HepG2 (cell line): ENCODE measurements at regions of chr11 and their contacts with region 1.

Region 1: GRCh38 chr11:105000797-105001196 is 22.2 kb downstream of the CASP5 start:
- DNase-seq: no peak
- ATAC-seq: no peak; the same call in 2 of the 3 replicates
- H3K4me3 ChIP-seq: no peak overlapping the region
- H3K27ac ChIP-seq: no peak overlapping the region
- H3K4me1 ChIP-seq: peaks cover 39% of the 10 kb centered on the region
- H3K27me3 ChIP-seq: no peaks in the 10 kb centered on the region
- CTCF ChIP-seq: peak; percentile 65
- EP300 ChIP-seq: no peak
- POLR2A ChIP-seq: no peak
- RAD21 ChIP-seq: no peak

Region 2: DNA sequence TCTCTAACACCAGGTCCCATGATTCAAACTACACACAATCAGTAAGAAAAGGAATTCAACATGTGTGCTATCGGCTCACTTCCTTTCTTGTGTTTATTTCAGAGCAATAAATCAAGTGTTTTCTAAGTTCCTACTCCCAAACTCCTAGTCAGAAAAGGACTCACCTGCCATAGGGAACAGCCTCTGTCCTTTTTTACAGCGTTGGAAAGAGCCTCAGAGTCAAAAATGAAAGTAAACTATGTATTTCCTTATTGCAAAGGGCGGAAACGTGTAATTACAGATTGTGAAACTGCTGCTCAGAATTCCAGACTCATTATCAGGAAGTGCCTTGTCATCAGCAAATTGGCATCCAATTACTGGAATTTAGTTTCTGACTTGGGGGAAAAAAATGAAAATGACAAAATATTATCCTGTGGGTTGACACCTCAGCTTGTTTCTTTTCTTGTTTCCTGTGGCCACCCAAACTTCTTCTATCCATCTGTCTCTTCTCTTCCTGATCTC is 32.4 kb before region 1 on chr11 and contains the start of gene CASP4:
- CTCF ChIA-PET with region 1: no interaction called
- POLR2A ChIA-PET with region 1: no interaction called
- in situ Hi-C with region 1: no loop called
- intact Hi-C with region 1: loop called (anchors 2 kb)
- DNase-seq: peak; percentile 56
- ATAC-seq: peak; percentile 52
- H3K4me3 ChIP-seq: peak within 1 kb of the TSS; percentile 67 to 84 (median 78)
- H3K27ac ChIP-seq: peak within 1 kb of the TSS; percentile 72
- H3K4me1 ChIP-seq: peaks cover 33% of the 10 kb centered on the region
- H3K27me3 ChIP-seq: no peaks in the 10 kb centered on the region; a peak in 1 of 5 replicates
- CTCF ChIP-seq: no peak
- EP300 ChIP-seq: peak in 1 of 2 experiments; percentile 23; a peak in 1 of 4 replicates
- POLR2A ChIP-seq: peak in 1 of 2 experiments; percentile 52; a peak in 2 of 4 replicates
- RAD21 ChIP-seq: no peak
- total RNA-seq, gene CASP4: 69.8 and 98.1 TPM in 2 replicates

Region 3: DNA sequence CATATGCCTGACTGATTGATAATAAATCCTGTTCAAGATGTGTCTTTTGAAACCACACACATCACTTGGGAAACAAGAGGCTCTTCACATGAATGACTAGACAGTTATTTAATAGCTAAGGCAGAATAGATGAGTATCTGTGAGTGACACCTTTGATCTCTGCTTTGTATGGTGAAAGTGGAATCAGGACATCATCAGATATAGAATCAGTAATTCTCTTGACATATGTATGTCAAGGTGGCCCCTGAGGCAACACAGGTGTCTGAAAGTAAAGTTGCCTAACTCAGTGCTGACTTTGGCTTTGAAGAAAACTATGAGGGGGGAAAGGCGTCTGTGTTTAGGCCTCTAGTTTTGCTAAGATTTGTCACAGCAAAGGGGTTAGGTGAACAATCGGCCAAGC is 20.9 kb before region 1 on chr11:
- CTCF ChIA-PET with region 1: no interaction called
- POLR2A ChIA-PET with region 1: no interaction called
- in situ Hi-C with region 1: no loop called
- intact Hi-C with region 1: no loop called
- DNase-seq: no peak
- ATAC-seq: no peak
- H3K4me3 ChIP-seq: no peak overlapping the region
- H3K27ac ChIP-seq: no peak overlapping the region
- H3K4me1 ChIP-seq: no peaks in the 10 kb centered on the region
- H3K27me3 ChIP-seq: no peaks in the 10 kb centered on the region
- CTCF ChIP-seq: no peak
- EP300 ChIP-seq: no peak
- POLR2A ChIP-seq: no peak
- RAD21 ChIP-seq: no peak

Region 4: GRCh38 chr11:105044921-105045524 is 44.2 kb after region 1 on chr11 and contains the start of gene CARD16:
- CTCF ChIA-PET with region 1: no interaction called
- POLR2A ChIA-PET with region 1: no interaction called
- in situ Hi-C with region 1: no loop called
- intact Hi-C with region 1: loop called (anchors 2 kb)
- DNase-seq: no peak
- ATAC-seq: no peak
- H3K4me3 ChIP-seq: no peak within 1 kb of the TSS
- H3K27ac ChIP-seq: no peak within 1 kb of the TSS
- H3K4me1 ChIP-seq: peaks cover 62% of the 10 kb centered on the region
- H3K27me3 ChIP-seq: no peaks in the 10 kb centered on the region
- CTCF ChIP-seq: no peak
- EP300 ChIP-seq: no peak
- POLR2A ChIP-seq: no peak
- RAD21 ChIP-seq: no peak
- total RNA-seq, gene CARD16: 0.53 TPM in 1 of 2 replicates, not detected in the other

Region 5: DNA sequence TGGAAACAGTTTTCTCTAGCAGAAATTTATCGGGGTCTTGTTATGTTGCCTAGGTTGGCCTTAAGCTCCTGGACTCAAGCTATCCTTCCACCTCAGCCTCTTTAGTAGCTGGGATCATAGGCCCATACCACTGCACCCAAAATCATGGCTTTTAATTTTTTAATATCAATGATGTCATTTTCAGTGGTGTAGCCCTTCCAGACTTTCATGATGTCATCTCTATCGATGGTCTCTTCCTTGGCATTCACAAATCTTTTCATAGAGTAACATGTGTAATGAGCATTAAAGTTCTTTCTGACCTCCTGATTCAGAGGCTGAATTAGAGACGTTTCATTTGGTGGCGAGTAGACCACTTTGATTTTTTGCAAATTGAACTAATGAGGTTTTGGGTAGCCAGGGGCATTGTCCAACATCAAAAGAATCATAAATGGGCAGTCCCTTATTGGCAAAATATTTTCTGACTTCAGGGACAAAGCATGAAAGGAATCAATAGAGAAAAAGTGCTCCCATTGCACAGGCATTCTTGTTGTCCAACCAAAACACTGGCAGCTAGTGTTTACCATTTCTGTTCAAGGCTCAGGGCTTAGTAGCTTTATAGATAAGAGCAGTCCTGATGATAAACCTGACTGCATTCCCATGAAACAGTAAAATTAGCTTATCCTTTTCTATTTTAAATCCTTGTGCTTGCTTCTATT is 50.6 kb after region 1 on chr11:
- CTCF ChIA-PET with region 1: no interaction called
- POLR2A ChIA-PET with region 1: no interaction called
- in situ Hi-C with region 1: no loop called
- intact Hi-C with region 1: loop called (anchors 2 kb)
- DNase-seq: peak; percentile 84
- ATAC-seq: peak; percentile 95
- H3K4me3 ChIP-seq: no peak overlapping the region; a peak in 1 of 6 replicates
- H3K27ac ChIP-seq: peak overlapping the region; percentile 62
- H3K4me1 ChIP-seq: peaks cover 68% of the 10 kb centered on the region
- H3K27me3 ChIP-seq: no peaks in the 10 kb centered on the region
- CTCF ChIP-seq: no peak
- EP300 ChIP-seq: peak in 1 of 2 experiments; percentile 86; a peak in 2 of 4 replicates
- POLR2A ChIP-seq: no peak
- RAD21 ChIP-seq: no peak

Region 6: GRCh38 chr11:105132716-105133511 is 132.1 kb after region 1 on chr11:
- CTCF ChIA-PET with region 1: no interaction called
- POLR2A ChIA-PET with region 1: no interaction called
- in situ Hi-C with region 1: no loop called
- intact Hi-C with region 1: loop called (anchors 5 kb)
- DNase-seq: peak; percentile 6
- ATAC-seq: no peak
- H3K4me3 ChIP-seq: no peak overlapping the region
- H3K27ac ChIP-seq: no peak overlapping the region
- H3K4me1 ChIP-seq: no peaks in the 10 kb centered on the region
- H3K27me3 ChIP-seq: no peaks in the 10 kb centered on the region
- CTCF ChIP-seq: no peak
- EP300 ChIP-seq: no peak
- POLR2A ChIP-seq: no peak
- RAD21 ChIP-seq: no peak

Region 7: DNA sequence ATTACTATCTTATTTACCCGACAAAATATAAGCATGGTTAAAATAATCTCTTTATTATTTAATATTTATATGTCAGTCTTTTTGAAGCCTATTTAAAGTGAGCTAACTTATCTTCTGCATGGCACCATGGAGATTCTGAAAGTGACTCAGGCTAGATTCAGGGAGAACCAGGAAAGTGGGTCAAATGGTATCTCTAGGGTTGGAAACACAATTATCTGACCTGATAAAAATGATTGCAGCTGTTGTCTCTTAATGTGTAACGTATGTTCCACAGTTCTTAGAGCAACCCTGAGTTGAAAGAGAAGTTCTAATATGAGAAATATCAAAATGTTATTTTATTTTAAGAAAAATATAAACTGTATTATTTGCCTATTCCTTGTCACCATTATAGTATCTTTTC is 281.9 kb after region 1 on chr11:
- CTCF ChIA-PET with region 1: no interaction called
- POLR2A ChIA-PET with region 1: no interaction called
- in situ Hi-C with region 1: no loop called
- intact Hi-C with region 1: no loop called
- DNase-seq: no peak
- ATAC-seq: no peak
- H3K4me3 ChIP-seq: no peak overlapping the region
- H3K27ac ChIP-seq: no peak overlapping the region
- H3K4me1 ChIP-seq: no peaks in the 10 kb centered on the region
- H3K27me3 ChIP-seq: no peaks in the 10 kb centered on the region
- CTCF ChIP-seq: no peak
- EP300 ChIP-seq: no peak
- POLR2A ChIP-seq: no peak
- RAD21 ChIP-seq: no peak